PC-9 (cell line): ENCODE measurements at regions of chr20 and their contacts with region 1.

Region 1: DNA sequence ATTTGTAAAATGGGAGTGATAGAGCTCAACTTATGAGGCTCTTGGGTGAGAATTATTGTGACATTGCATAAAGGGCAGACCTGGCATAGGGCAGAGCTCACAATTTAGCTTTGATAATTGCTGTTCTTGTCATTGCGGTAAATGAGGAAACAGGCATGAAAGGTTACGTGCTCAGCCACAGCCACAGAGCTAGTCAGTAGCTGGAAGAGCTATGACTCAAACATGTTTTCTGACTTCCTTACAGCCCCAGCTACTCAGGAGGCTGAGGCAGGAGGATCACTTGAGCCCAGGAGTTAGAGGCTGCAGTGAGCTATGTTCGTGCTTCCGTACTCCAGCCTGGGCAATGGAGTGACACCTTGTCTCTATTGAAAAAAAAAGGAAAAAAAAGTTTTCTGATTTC is 3.5 kb upstream of the GHRH start:
- DNase-seq: no peak
- H3K4me3 ChIP-seq: no peak overlapping the region
- H3K27ac ChIP-seq: no peak overlapping the region
- H3K4me1 ChIP-seq: no peaks in the 10 kb centered on the region
- H3K27me3 ChIP-seq: peaks cover 17% of the 10 kb centered on the region
- CTCF ChIP-seq: no peak

Region 2: GRCh38 chr20:35893942-35894341 is 1371.2 kb before region 1 on chr20:
- CTCF ChIA-PET with region 1: no interaction called
- POLR2A ChIA-PET with region 1: no interaction called
- intact Hi-C with region 1: no loop called
- DNase-seq: no peak
- H3K4me3 ChIP-seq: no peak overlapping the region
- H3K27ac ChIP-seq: no peak overlapping the region
- H3K4me1 ChIP-seq: no peaks in the 10 kb centered on the region
- H3K27me3 ChIP-seq: no peaks in the 10 kb centered on the region
- CTCF ChIP-seq: no peak

Region 3: GRCh38 chr20:37384683-37385174 is 119.6 kb after region 1 on chr20:
- CTCF ChIA-PET with region 1: no interaction called
- POLR2A ChIA-PET with region 1: no interaction called
- intact Hi-C with region 1: loop called (anchors 2 kb)
- DNase-seq: peak in 1 of 2 experiments; percentile 55
- H3K4me3 ChIP-seq: no peak overlapping the region
- H3K27ac ChIP-seq: no peak overlapping the region
- H3K4me1 ChIP-seq: peaks cover 8% of the 10 kb centered on the region; the same call in 1 of the 2 replicates
- H3K27me3 ChIP-seq: no peaks in the 10 kb centered on the region
- CTCF ChIP-seq: peak; percentile 80